PC-9 (cell line): ENCODE measurements at regions of chr9 and their contacts with region 1.

Region 1: DNA sequence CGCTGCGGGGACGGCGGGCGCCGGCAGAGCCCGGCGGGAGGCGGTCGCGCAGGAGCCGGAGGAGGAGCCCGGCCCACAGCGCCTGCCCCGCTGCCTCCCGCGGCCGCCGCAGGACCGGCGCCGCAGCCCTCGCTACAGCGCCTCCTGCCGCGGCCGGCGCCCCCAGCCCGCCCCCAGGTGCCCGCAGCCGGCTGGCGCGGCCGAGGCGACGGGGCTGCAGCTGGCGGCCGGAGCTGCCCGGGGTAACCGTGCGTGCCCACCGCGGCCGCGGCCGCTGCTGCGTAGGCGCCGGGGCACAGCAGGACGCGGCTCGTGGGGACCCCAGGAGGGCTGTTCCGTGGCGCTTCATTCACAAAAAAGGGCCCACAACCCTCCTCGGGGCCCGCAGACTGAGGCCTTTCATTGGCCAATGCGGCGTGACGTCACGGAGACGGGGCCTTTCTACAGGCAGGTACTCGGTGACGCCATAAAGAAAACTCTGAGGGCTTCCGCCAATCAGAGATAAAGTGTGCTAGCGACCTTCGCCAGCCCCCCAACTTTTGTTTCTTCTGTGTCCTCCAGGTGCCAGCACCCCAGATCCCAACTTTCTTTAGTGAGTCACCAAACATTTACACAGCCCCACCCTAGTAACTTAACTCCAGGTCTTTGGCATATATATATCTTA is at the start of gene CDC14B:
- DNase-seq: peak; percentile 96 to 98
- H3K4me3 ChIP-seq: peak within 1 kb of the TSS; percentile 88
- H3K27ac ChIP-seq: peak within 1 kb of the TSS; percentile 67
- H3K4me1 ChIP-seq: peaks cover 36% of the 10 kb centered on the region
- H3K27me3 ChIP-seq: no peaks in the 10 kb centered on the region
- CTCF ChIP-seq: no peak
- total RNA-seq, gene CDC14B: 43.3 and 47.2 TPM in 2 replicates

Region 2: GRCh38 chr9:96344458-96345180 is 275.0 kb before region 1 on chr9:
- CTCF ChIA-PET with region 1: no interaction called
- POLR2A ChIA-PET with region 1: interaction called, 28 read pairs
- intact Hi-C with region 1: no loop called
- DNase-seq: peak; percentile 66 to 87
- H3K4me3 ChIP-seq: no peak overlapping the region
- H3K27ac ChIP-seq: peak overlapping the region; percentile 28
- H3K4me1 ChIP-seq: peaks cover 25% of the 10 kb centered on the region
- H3K27me3 ChIP-seq: no peaks in the 10 kb centered on the region
- CTCF ChIP-seq: no peak

Region 3: GRCh38 chr9:96566498-96567207 is 53.0 kb before region 1 on chr9:
- CTCF ChIA-PET with region 1: no interaction called
- POLR2A ChIA-PET with region 1: interaction called, 12 read pairs
- intact Hi-C with region 1: loop called (anchors 1 kb)
- DNase-seq: peak; percentile 78 to 91
- H3K4me3 ChIP-seq: peak overlapping the region; percentile 88
- H3K27ac ChIP-seq: peak overlapping the region; percentile 92
- H3K4me1 ChIP-seq: peaks cover 31% of the 10 kb centered on the region
- H3K27me3 ChIP-seq: no peaks in the 10 kb centered on the region
- CTCF ChIP-seq: peak; percentile 61

Region 4: GRCh38 chr9:96875461-96876364 is 256.1 kb after region 1 on chr9:
- CTCF ChIA-PET with region 1: no interaction called
- POLR2A ChIA-PET with region 1: interaction called, 15 read pairs
- intact Hi-C with region 1: no loop called
- DNase-seq: peak; percentile 68 to 77
- H3K4me3 ChIP-seq: peak overlapping the region; percentile 91
- H3K27ac ChIP-seq: peak overlapping the region; percentile 83
- H3K4me1 ChIP-seq: peaks cover 17% of the 10 kb centered on the region
- H3K27me3 ChIP-seq: no peaks in the 10 kb centered on the region
- CTCF ChIP-seq: peak; percentile 52; the same call in 1 of the 2 replicates